ENCODE measurements at regions of chr1 and their contacts with region 1.

Region 1: DNA sequence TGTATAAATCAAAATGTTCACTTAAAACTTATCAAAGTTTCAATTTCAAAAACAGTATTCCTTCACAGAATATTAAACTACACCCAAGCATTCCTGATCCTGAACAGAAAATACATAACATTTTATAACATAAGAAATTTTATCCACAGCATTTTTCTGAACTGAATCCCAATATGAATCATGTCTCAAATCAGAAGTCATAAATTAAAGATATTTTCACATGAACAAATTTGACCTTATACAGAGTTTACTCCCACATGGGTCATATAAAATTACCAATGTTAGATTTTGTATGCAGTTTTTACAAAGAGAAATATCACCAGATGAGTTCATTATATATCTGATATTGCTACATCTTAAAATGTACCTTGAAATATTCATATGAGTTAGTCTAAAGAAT is 48.6 kb upstream of the ASPM start:
- DNase-seq: no peak

Region 2: GRCh38 chr1:197150336-197151005 is 44.6 kb before region 1 on chr1:
- intact Hi-C with region 1: loop called (anchors 5 kb)
- DNase-seq: no peak

Measured in cardiac septum (tissue), 1 donor.